Heart right ventricle (tissue), 16 donors: ENCODE measurements at regions of chr12 and their contacts with region 1.

Region 1: DNA sequence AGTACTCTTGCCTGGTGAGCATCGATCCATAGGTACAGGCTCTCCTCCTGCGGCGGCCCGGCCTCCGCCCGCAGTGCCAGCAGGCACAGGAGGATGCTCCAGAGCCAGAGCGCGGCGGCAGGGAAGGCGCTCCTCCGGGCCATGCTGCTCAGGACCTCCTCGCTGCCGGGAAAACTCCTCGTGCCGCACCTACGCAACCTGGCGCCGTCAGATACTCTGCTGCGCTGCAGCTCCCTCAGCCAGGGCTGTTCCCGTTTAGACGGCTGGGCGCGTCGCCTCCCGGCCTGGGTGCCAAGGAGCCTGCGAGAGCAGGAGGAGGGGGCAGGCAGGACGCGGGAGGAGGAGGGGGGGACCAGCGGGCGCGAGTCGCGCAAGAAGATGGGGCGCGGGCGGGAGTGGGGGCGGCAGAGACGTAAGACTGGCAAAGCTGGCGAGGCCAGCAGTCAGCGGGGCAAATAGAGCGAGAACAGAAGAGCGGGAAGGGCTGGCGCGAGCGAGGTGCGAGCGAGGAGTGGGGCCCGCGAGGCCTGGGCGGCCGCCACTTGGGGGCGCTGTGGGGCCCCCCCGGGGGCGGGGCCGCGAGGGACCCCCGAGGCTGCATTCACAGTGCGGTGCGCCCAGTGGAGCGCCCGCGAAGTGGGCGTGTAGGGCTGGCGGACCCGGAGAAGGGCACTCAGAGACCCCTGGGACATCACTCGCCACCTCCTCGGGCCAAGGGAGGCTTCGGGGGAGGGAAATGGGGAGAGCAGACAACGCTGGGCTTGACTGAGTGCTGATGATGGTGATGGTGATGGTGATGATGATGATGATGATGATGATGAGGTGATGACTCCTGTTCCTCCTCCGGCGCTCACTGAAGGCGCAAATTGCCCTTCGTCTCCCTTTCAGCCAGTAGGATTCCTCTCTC is at the start of gene WIF1:
- DNase-seq: peak in 1 of 2 donors; percentile 14
- ATAC-seq: peak in 2 of 8 donors; percentile 34 to 51
- H3K4me3 ChIP-seq: peak within 1 kb of the TSS in 9 of 10 donors; percentile 21 to 48 (median 30)
- H3K27ac ChIP-seq: no peak within 1 kb of the TSS
- H3K4me1 ChIP-seq: peaks cover 4 to 12% (median 9%) of the 10 kb centered on the region in 9 donors
- H3K27me3 ChIP-seq: peaks cover 7 to 100% (median 97%) of the 10 kb centered on the region in 7 donors
- CTCF ChIP-seq: peak in 7 of 9 donors; percentile 11 to 44 (median 31)
- total RNA-seq, gene WIF1: not detected

Region 2: GRCh38 chr12:64801381-64801780 is 319.9 kb before region 1 on chr12:
- intact Hi-C with region 1: loop called in 3 of 10 experiments (anchors 5 to 10 kb)
- DNase-seq: no peak
- ATAC-seq: no peak
- H3K4me3 ChIP-seq: no peak overlapping the region
- H3K27ac ChIP-seq: no peak overlapping the region
- H3K4me1 ChIP-seq: peaks cover 0 to 10% (median 0%) of the 10 kb centered on the region in 9 donors
- H3K27me3 ChIP-seq: peaks cover 0 to 4% (median 0%) of the 10 kb centered on the region in 7 donors
- CTCF ChIP-seq: no peak

Region 3: DNA sequence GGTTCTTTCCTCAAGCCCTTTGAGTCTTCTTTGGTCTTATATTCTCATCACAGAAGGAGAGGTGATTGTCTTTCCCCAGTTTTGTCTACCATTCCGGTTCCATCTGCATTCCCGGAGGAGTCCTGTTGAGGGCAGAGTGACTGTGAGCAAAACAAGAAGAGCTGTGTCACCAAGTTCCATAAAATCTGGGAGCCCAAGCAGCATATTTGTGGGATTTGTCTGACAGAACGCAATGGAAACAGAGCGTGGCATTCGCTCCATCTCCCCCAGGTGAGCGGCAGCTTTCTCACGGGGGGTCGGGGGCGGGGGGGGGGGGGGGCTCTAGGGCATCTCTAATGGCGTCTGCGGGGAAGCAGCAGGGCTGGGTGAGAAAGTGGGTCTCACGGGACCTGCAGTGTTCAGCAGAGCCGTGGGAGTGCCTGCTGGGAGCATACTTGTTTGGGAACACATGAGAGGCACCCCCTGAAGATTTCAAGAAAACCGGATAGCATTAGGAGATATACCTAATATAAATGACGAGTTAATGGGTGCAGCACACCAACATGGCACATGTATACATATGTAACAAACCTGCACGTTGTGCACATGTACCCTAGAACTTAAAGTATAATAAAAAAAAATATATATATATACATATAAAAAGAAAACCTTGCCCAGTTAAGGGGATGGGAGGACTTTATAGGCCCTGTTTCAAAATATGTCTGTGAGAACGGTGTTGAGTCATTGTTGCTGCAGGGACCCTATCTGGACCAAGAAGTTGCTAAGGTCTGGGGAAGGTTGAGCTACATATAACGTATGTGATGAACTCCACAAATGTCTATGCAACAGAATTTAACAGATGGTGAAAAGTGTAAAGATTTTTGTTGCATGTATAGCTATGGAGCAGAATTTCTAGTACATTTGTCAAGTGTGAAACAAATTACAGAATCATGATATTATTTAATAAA is 237.4 kb before region 1 on chr12:
- intact Hi-C with region 1: loop called in 1 of 10 experiments (anchors 10 kb)
- DNase-seq: no peak
- ATAC-seq: no peak
- H3K4me3 ChIP-seq: no peak overlapping the region
- H3K27ac ChIP-seq: no peak overlapping the region
- H3K4me1 ChIP-seq: no peaks in the 10 kb centered on the region
- H3K27me3 ChIP-seq: peaks cover 0 to 4% (median 0%) of the 10 kb centered on the region in 7 donors
- CTCF ChIP-seq: no peak

Region 4: GRCh38 chr12:65217086-65217485 is 95.8 kb after region 1 on chr12:
- intact Hi-C with region 1: loop called in 1 of 10 experiments (anchors 5 kb)
- DNase-seq: no peak
- ATAC-seq: no peak
- H3K4me3 ChIP-seq: no peak overlapping the region
- H3K27ac ChIP-seq: no peak overlapping the region
- H3K4me1 ChIP-seq: peaks cover 0 to 12% (median 0%) of the 10 kb centered on the region in 9 donors
- H3K27me3 ChIP-seq: no peaks in the 10 kb centered on the region
- CTCF ChIP-seq: no peak

Region 5: GRCh38 chr12:65232476-65233077 is 111.3 kb after region 1 on chr12:
- intact Hi-C with region 1: loop called in 1 of 10 experiments (anchors 5 kb)
- DNase-seq: no peak
- ATAC-seq: no peak
- H3K4me3 ChIP-seq: no peak overlapping the region
- H3K27ac ChIP-seq: no peak overlapping the region
- H3K4me1 ChIP-seq: peaks cover 0 to 6% (median 0%) of the 10 kb centered on the region in 9 donors
- H3K27me3 ChIP-seq: no peaks in the 10 kb centered on the region
- CTCF ChIP-seq: peak; percentile 40 to 73 (median 57)